BJ (cell line): ENCODE measurements at regions of chr11 and their contacts with region 1.

Region 1: DNA sequence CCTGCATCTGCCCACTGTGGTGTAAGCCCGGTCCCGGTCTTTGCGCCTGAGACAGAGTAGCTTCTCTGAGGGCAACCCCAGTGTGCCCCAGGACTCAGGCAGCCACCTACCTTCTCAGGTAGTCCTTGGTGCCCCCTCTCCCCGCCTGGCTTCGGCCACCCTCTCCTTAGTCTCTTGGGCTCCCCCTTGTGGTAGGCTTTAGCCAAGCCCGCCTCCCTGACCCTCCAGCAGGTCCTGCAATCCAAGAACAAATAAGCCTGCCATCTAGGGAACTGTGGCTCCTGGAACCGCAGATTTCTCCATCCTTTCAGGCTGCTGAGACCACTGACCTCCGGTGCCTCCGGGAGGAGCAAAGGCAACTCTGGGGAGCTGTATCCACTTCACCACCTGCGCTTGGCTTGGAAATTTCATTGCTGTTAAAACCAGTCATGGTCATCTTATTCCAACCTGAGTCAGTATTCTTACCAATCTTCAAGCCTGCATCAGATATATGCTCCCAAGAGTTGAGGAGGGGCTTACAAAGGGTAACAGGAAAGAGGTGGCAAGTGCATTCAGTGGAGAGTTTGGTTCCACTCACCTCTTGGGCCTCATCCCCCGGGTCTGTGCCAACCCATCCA is 52.8 kb upstream of the TENM4 start:
- DNase-seq: peak; percentile 5
- H3K4me3 ChIP-seq: no peak overlapping the region
- H3K27me3 ChIP-seq: no peaks in the 10 kb centered on the region
- CTCF ChIP-seq: peak; percentile 98

Region 2: GRCh38 chr11:79400717-79401686 is 92.7 kb before region 1 on chr11:
- CTCF ChIA-PET with region 1: interaction called, 49 read pairs
- POLR2A ChIA-PET with region 1: no interaction called
- DNase-seq: no peak
- H3K4me3 ChIP-seq: no peak overlapping the region
- H3K27me3 ChIP-seq: no peaks in the 10 kb centered on the region; the same call in 1 of the 2 replicates
- CTCF ChIP-seq: peak; percentile 79

Region 3: GRCh38 chr11:79413268-79413667 is 80.4 kb before region 1 on chr11:
- CTCF ChIA-PET with region 1: interaction called, 10 read pairs
- POLR2A ChIA-PET with region 1: no interaction called
- DNase-seq: peak; percentile 79
- H3K4me3 ChIP-seq: no peak overlapping the region
- H3K27me3 ChIP-seq: no peaks in the 10 kb centered on the region
- CTCF ChIP-seq: 0 out of 2 replicates have a peak, but pooled peaks have one; percentile 9

Region 4: DNA sequence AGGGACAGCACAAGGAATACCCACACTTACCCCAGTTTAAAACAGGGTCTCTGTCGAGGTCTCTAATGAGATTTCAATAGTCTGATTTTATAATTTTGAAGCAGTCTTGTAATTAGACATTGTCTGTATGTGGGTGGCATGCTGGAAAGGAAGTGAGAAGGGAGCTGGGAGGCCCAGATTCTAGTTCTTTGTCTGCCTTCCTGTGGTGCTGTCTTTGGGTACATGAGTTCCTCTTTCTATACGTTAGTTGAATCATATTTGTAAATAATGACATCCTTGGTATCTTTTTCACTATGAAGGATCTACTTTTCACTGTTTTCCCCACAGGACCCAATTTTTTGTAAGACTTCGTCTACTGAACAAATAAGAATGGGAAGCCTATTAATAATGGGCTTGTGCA is 10.9 kb before region 1 on chr11:
- CTCF ChIA-PET with region 1: interaction called, 47 read pairs
- POLR2A ChIA-PET with region 1: no interaction called
- DNase-seq: no peak
- H3K4me3 ChIP-seq: no peak overlapping the region
- H3K27me3 ChIP-seq: peaks cover 4% of the 10 kb centered on the region; the same call in 1 of the 2 replicates
- CTCF ChIP-seq: no peak

Region 5: GRCh38 chr11:79506734-79507344 is 13.2 kb after region 1 on chr11:
- CTCF ChIA-PET with region 1: interaction called, 10 read pairs
- POLR2A ChIA-PET with region 1: no interaction called
- DNase-seq: no peak
- H3K4me3 ChIP-seq: no peak overlapping the region
- H3K27me3 ChIP-seq: no peaks in the 10 kb centered on the region; the same call in 1 of the 2 replicates
- CTCF ChIP-seq: no peak

Region 6: GRCh38 chr11:79512706-79513469 is 19.2 kb after region 1 on chr11:
- CTCF ChIA-PET with region 1: interaction called, 12 read pairs
- POLR2A ChIA-PET with region 1: no interaction called
- DNase-seq: no peak
- H3K4me3 ChIP-seq: no peak overlapping the region
- H3K27me3 ChIP-seq: no peaks in the 10 kb centered on the region; the same call in 1 of the 2 replicates
- CTCF ChIP-seq: no peak